ENCODE measurements at regions of chr11 and their contacts with region 1.

Region 1: GRCh38 chr11:86244522-86245368 is at the start of gene EED:
- DNase-seq: peak; percentile 91 to 96
- ATAC-seq: peak; percentile 89 to 96 (median 89)
- H3K4me3 ChIP-seq: peak within 1 kb of the TSS; percentile 82
- H3K4me3 Mint-ChIP-seq: no peak within 1 kb of the TSS
- H3K27ac ChIP-seq: peak within 1 kb of the TSS; percentile 98
- H3K27ac Mint-ChIP-seq: no peak within 1 kb of the TSS
- H3K4me1 ChIP-seq: peaks cover 11% of the 10 kb centered on the region
- H3K4me1 Mint-ChIP-seq: peaks cover 0 to 20% of the 10 kb centered on the region in 2 donors
- H3K27me3 ChIP-seq: no peaks in the 10 kb centered on the region
- H3K27me3 Mint-ChIP-seq: peaks cover 0 to 11% of the 10 kb centered on the region in 2 donors
- CTCF ChIP-seq: no peak
- total RNA-seq, gene EED: 26.0 to 36.9 (median 34.0) TPM

Region 2: GRCh38 chr11:85627998-85628770 is 616.6 kb before region 1 on chr11 and contains the start of gene TMEM126B:
- intact Hi-C with region 1: loop called (anchors 1 kb)
- DNase-seq: peak; percentile 94 to 96
- ATAC-seq: peak; percentile 96 to 100 (median 97)
- H3K4me3 ChIP-seq: peak within 1 kb of the TSS; percentile 69
- H3K4me3 Mint-ChIP-seq: peak within 1 kb of the TSS; percentile 98
- H3K27ac ChIP-seq: peak within 1 kb of the TSS; percentile 78
- H3K27ac Mint-ChIP-seq: peak within 1 kb of the TSS; percentile 95 to 100
- H3K4me1 ChIP-seq: peaks cover 6% of the 10 kb centered on the region
- H3K4me1 Mint-ChIP-seq: peaks cover 27 to 29% of the 10 kb centered on the region in 2 donors
- H3K27me3 ChIP-seq: no peaks in the 10 kb centered on the region
- H3K27me3 Mint-ChIP-seq: peaks cover 0 to 14% of the 10 kb centered on the region in 2 donors
- CTCF ChIP-seq: no peak
- total RNA-seq, gene TMEM126B: 29.4 to 38.6 (median 31.2) TPM

Region 3: DNA sequence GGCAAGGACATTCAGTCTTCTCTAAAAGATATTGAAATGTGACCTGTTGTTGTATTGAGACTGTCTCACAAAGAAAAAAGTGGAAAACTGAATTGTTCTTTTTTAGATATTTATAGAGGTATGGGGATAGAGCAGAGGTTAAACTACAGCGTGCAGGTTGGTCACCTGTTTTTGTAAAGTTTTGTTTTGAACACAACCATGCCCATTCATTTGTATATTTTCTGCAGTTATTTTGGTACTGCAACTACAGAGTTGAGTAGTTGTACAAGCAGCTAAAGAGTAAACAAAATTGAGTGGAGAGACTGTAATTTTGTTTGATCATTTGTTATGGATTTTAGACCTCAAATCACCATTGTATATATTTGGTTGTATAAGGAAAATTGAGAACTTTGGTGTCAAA is 11.2 kb after region 1 on chr11:
- intact Hi-C with region 1: no loop called
- DNase-seq: no peak
- ATAC-seq: no peak
- H3K4me3 ChIP-seq: no peak overlapping the region
- H3K4me3 Mint-ChIP-seq: no peak overlapping the region
- H3K27ac ChIP-seq: no peak overlapping the region
- H3K27ac Mint-ChIP-seq: no peak overlapping the region
- H3K4me1 ChIP-seq: no peaks in the 10 kb centered on the region
- H3K4me1 Mint-ChIP-seq: peaks cover 6% of the 10 kb centered on the region in 2 donors
- H3K27me3 ChIP-seq: no peaks in the 10 kb centered on the region
- H3K27me3 Mint-ChIP-seq: no peaks in the 10 kb centered on the region
- CTCF ChIP-seq: no peak

Region 4: DNA sequence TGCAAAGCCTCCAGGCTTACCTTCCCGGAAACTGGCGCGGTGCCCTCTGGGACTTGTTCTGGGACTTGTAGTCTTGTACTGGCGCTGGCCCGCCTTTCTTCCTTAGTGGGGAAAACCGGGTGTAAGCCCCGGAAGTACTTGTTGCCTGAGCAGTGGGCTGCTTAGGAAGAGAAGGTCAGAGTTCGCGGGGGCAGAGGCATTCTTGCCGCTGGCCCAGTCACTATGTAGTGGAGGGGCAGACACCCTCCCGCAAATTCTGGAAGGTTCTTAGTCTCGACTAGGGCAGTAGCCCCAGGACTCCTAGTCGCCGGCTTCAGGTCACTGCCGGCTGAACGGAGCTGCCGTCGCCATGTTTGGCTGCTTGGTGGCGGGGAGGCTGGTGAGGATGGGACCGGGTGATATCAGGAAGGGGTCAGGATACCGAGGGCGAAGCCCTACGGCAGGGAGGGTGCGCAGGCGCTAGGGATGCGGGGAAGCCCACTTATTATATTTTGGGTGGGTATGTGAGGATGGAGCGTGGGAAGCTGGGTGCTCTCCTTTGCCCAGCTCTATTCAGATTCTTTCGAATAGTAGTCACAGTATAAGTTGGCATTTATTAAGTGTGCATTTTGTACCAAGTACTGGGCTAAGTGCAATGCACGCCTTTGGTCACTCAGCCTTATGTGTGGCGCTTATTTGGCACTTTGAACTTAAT is 57.5 kb after region 1 on chr11 and contains the start of gene HIKESHI:
- intact Hi-C with region 1: loop called (anchors 5 kb)
- DNase-seq: peak; percentile 74 to 95
- ATAC-seq: peak; percentile 96 to 99 (median 98)
- H3K4me3 ChIP-seq: peak within 1 kb of the TSS; percentile 92
- H3K4me3 Mint-ChIP-seq: peak within 1 kb of the TSS; percentile 99
- H3K27ac ChIP-seq: peak within 1 kb of the TSS; percentile 84
- H3K27ac Mint-ChIP-seq: peak within 1 kb of the TSS; percentile 98 to 100
- H3K4me1 ChIP-seq: peaks cover 3% of the 10 kb centered on the region
- H3K4me1 Mint-ChIP-seq: peaks cover 22 to 24% of the 10 kb centered on the region in 2 donors
- H3K27me3 ChIP-seq: peaks cover 2% of the 10 kb centered on the region
- H3K27me3 Mint-ChIP-seq: peaks cover 8 to 10% of the 10 kb centered on the region in 2 donors
- CTCF ChIP-seq: no peak
- total RNA-seq, gene HIKESHI: 12.7 to 24.2 (median 18.2) TPM

Measured in natural killer cell (primary cell).